SK-N-SH (cell line): ENCODE measurements at regions of chr17 and their contacts with region 1.

Region 1: DNA sequence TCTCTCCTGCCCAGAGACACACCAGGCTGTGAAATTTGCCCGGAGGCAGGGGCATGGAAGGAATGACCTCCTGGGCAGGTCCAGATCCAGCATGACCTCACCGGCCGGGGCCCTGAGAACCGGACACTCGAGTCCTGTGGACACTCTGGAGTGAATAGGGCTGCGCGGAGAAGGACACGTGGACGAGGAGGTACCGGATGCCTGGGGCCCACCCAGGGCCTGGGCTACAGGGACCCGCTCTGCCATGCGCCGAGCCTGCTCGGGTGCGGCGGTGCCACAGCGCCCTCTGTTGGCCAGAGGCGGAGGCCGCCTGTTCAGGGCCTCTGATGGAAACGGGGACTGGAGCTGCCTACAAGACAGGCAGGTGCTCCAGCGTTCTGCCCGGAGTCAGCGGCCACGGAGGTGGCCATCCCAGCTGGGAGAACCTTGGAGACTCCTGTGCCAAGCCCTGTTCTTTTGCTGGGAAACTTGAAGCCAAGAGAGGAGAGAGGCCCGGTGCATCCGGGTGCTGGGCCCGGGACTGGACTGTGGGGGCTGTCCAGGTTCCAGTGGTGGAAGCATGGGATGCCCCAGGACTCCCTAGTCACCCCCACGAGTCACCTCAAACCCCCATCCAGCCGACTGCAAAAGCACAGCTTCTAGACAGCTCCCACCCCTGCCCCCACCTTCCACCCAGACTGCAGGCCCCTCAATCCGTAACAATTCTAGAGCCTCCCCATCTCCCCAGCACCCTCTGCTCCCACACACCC is 19.3 kb upstream of the NXPH3 start:
- DNase-seq: peak; percentile 98
- H3K4me3 ChIP-seq: no peak overlapping the region
- H3K27ac ChIP-seq: no peak overlapping the region
- H3K4me1 ChIP-seq: peaks cover 0 to 8% of the 10 kb centered on the region in 2 experiments; a peak in 1 of 4 replicates
- H3K27me3 ChIP-seq: peaks cover 20% of the 10 kb centered on the region; the same call in 1 of the 2 replicates
- CTCF ChIP-seq: peak; percentile 100
- EP300 ChIP-seq: no peak
- RAD21 ChIP-seq: peak; percentile 99

Region 2: GRCh38 chr17:48492401-48493298 is 1063.7 kb before region 1 on chr17:
- CTCF ChIA-PET with region 1: no interaction called
- POLR2A ChIA-PET with region 1: no interaction called
- DNase-seq: peak; percentile 81
- H3K4me3 ChIP-seq: peak overlapping the region in 1 of 2 experiments; percentile 35; a peak in 2 of 4 replicates
- H3K27ac ChIP-seq: no peak overlapping the region
- H3K4me1 ChIP-seq: no peaks in the 10 kb centered on the region
- H3K27me3 ChIP-seq: peaks cover 60% of the 10 kb centered on the region; the same call in 1 of the 2 replicates
- CTCF ChIP-seq: peak; percentile 85
- EP300 ChIP-seq: no peak
- RAD21 ChIP-seq: peak; percentile 47

Region 3: DNA sequence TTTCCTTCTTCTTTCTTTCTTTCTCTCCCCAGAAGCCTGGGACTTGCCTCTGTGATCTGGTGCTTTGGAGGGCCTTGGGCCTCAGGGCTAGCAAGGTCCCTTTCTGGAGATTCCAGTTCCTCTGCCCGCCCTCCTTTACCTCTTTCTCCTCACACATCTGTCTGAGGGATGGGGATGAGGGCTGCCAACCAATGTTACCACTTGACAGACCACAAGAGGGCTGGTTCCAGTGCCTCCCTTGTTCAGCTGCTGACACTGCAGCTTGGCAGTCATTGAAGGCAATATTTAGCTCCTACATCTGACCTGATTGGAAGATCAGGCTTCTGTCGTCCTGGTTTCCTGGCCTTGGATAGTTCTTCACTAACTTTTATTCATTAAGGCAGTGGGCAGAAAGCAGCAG is 190.7 kb before region 1 on chr17:
- CTCF ChIA-PET with region 1: interaction called, 12 read pairs
- POLR2A ChIA-PET with region 1: no interaction called
- DNase-seq: peak; percentile 57
- H3K4me3 ChIP-seq: no peak overlapping the region
- H3K27ac ChIP-seq: no peak overlapping the region
- H3K4me1 ChIP-seq: peaks cover 0 to 6% of the 10 kb centered on the region in 2 experiments; a peak in 1 of 4 replicates
- H3K27me3 ChIP-seq: no peaks in the 10 kb centered on the region
- CTCF ChIP-seq: peak; percentile 37; the same call in 1 of the 2 replicates
- EP300 ChIP-seq: no peak
- RAD21 ChIP-seq: peak; percentile 36; the same call in 1 of the 2 replicates

Region 4: DNA sequence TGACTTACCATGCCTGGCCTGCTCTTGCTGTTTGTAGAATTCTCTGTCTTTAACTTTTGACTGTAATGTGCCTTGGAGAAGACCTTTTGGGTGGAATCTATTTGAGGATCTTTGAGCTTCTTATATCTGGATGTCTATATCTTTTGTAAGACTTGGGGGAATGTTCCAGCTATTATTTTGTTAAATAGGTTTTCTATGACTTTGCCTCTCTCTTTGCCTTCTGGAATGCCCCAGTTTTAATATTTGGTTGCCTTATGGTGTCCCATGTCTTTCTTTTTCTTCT is 131.5 kb before region 1 on chr17:
- CTCF ChIA-PET with region 1: interaction called, 492 read pairs
- POLR2A ChIA-PET with region 1: no interaction called
- DNase-seq: no peak
- H3K4me3 ChIP-seq: peak overlapping the region in 1 of 2 experiments; percentile 5; a peak in 1 of 4 replicates
- H3K27ac ChIP-seq: peak overlapping the region in 1 of 2 experiments; percentile 35; a peak in 2 of 4 replicates
- H3K4me1 ChIP-seq: no peaks in the 10 kb centered on the region
- H3K27me3 ChIP-seq: peaks cover 15% of the 10 kb centered on the region; the same call in 1 of the 2 replicates
- CTCF ChIP-seq: no peak
- EP300 ChIP-seq: no peak
- RAD21 ChIP-seq: no peak

Region 5: DNA sequence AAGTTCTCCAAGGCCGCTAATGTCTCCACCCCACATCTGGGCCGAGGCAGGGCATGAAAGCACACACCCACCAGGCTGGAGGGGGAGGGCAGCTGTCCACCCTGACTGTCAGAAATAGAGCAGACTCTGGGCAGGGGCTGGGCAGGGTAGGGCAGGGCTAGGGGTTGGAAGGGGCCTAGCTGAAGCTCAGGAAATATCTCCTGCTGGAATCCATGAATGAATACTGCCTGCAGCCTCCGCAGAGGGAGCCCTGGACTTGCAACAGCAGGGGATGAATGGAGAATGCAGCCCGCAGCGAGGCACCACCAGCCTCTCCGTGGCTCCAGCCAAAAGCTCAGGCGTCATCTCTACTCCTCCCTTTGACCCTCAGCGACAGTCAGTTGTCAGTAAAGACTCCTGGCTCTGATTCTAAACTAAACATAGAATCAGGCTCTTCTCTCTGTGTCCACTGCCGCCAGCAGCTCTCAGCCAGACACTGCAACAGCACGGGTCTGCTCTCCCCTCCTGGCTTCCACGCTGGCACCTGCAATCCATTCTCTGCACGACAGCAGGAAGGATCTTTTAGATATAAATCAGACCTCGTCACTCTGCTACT is 85.2 kb before region 1 on chr17:
- CTCF ChIA-PET with region 1: interaction called, 117 read pairs
- POLR2A ChIA-PET with region 1: no interaction called
- DNase-seq: peak; percentile 87
- H3K4me3 ChIP-seq: no peak overlapping the region
- H3K27ac ChIP-seq: peak overlapping the region in 1 of 2 experiments; percentile 82; a peak in 2 of 4 replicates
- H3K4me1 ChIP-seq: peaks cover 0 to 32% of the 10 kb centered on the region in 2 experiments; a peak in 1 of 4 replicates
- H3K27me3 ChIP-seq: peaks cover 68% of the 10 kb centered on the region
- CTCF ChIP-seq: no peak
- EP300 ChIP-seq: no peak
- RAD21 ChIP-seq: peak; percentile 44

Region 6: GRCh38 chr17:49515196-49515770 is 41.1 kb before region 1 on chr17:
- CTCF ChIA-PET with region 1: interaction called, 338 read pairs
- POLR2A ChIA-PET with region 1: interaction called, 3 read pairs
- DNase-seq: peak; percentile 97
- H3K4me3 ChIP-seq: no peak overlapping the region
- H3K27ac ChIP-seq: peak overlapping the region; percentile 15 to 99; a peak in 3 of 4 replicates
- H3K4me1 ChIP-seq: peaks cover 7 to 76% of the 10 kb centered on the region in 2 experiments
- H3K27me3 ChIP-seq: peaks cover 2% of the 10 kb centered on the region; the same call in 1 of the 2 replicates
- CTCF ChIP-seq: no peak
- EP300 ChIP-seq: peak in 1 of 2 experiments; percentile 94; a peak in 2 of 4 replicates
- RAD21 ChIP-seq: peak; percentile 46; the same call in 1 of the 2 replicates

Region 7: DNA sequence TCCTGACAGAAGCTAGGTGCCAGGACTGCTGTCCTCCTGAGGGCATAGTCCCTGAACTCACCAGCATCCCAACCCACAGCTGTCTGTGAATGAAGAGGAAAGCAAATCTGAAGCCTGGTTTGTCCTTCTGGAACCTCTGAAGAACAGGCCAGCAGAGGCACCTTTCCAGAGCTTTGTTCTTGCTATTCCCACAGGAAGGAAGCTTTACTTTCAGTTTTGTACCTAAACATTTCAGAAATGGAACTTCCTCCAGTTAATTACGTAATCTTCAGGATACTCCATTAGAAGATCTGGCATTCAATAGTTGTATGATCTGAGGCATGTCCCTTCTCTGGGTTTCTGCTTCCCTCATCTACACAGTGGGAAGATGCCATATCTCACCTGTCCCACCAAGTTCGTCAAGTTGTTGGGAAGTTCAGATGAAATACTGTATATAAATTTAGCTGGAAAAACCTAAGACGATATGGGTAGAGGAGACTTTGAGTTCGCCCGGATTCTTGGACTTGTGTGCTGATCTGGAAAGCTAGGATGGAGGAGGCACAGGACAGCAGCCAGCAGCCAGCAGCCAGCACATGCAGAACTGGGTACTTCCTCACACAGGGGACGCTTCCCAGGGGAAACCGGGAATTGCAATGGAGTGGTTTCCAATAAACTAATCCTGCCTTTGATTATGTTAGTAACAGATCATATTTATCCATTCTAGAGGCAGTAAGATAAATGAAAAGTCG is 41.7 kb after region 1 on chr17:
- CTCF ChIA-PET with region 1: interaction called, 18 read pairs
- POLR2A ChIA-PET with region 1: no interaction called
- DNase-seq: no peak
- H3K4me3 ChIP-seq: no peak overlapping the region
- H3K27ac ChIP-seq: no peak overlapping the region
- H3K4me1 ChIP-seq: no peaks in the 10 kb centered on the region; a peak in 1 of 4 replicates
- H3K27me3 ChIP-seq: no peaks in the 10 kb centered on the region
- CTCF ChIP-seq: no peak
- EP300 ChIP-seq: no peak
- RAD21 ChIP-seq: no peak

Region 8: GRCh38 chr17:49997791-49998703 is 441.6 kb after region 1 on chr17:
- CTCF ChIA-PET with region 1: interaction called, 33 read pairs
- POLR2A ChIA-PET with region 1: no interaction called
- DNase-seq: peak; percentile 92
- H3K4me3 ChIP-seq: peak overlapping the region in 1 of 2 experiments; percentile 3; a peak in 2 of 4 replicates
- H3K27ac ChIP-seq: no peak overlapping the region
- H3K4me1 ChIP-seq: peaks cover 6 to 12% of the 10 kb centered on the region in 2 experiments; a peak in 1 of 4 replicates
- H3K27me3 ChIP-seq: peaks cover 76% of the 10 kb centered on the region
- CTCF ChIP-seq: peak; percentile 99
- EP300 ChIP-seq: no peak
- RAD21 ChIP-seq: peak; percentile 99